ENCODE measurements at regions of chr1 and their contacts with region 1.

Region 1: GRCh38 chr1:78676347-78676982 is 26.8 kb downstream of the IFI44 start:
- DNase-seq: no peak
- H3K4me3 ChIP-seq: no peak overlapping the region
- H3K27ac ChIP-seq: no peak overlapping the region
- H3K4me1 ChIP-seq: no peaks in the 10 kb centered on the region
- H3K27me3 ChIP-seq: no peaks in the 10 kb centered on the region
- CTCF ChIP-seq: peak in 2 of 3 experiments; percentile 35 to 60; a peak in 2 of 4 replicates
- EP300 ChIP-seq: no peak
- POLR2A ChIP-seq: no peak
- RAD21 ChIP-seq: peak; percentile 62 to 68

Region 2: GRCh38 chr1:78617615-78618026 is 58.8 kb before region 1 on chr1:
- CTCF ChIA-PET with region 1: interaction called, 21 read pairs
- POLR2A ChIA-PET with region 1: no interaction called
- DNase-seq: peak; percentile 13 to 54
- H3K4me3 ChIP-seq: no peak overlapping the region
- H3K27ac ChIP-seq: no peak overlapping the region
- H3K4me1 ChIP-seq: no peaks in the 10 kb centered on the region
- H3K27me3 ChIP-seq: no peaks in the 10 kb centered on the region
- CTCF ChIP-seq: peak in 2 of 3 experiments; percentile 73 to 81; a peak in 3 of 4 replicates
- EP300 ChIP-seq: no peak
- POLR2A ChIP-seq: no peak
- RAD21 ChIP-seq: peak; percentile 78 to 84

Region 3: GRCh38 chr1:78664763-78665162 is 11.7 kb before region 1 on chr1:
- CTCF ChIA-PET with region 1: interaction called, 14 read pairs
- POLR2A ChIA-PET with region 1: no interaction called
- DNase-seq: no peak
- H3K4me3 ChIP-seq: no peak overlapping the region
- H3K27ac ChIP-seq: no peak overlapping the region
- H3K4me1 ChIP-seq: no peaks in the 10 kb centered on the region
- H3K27me3 ChIP-seq: no peaks in the 10 kb centered on the region; a peak in 1 of 7 replicates
- CTCF ChIP-seq: no peak
- EP300 ChIP-seq: no peak
- POLR2A ChIP-seq: no peak
- RAD21 ChIP-seq: no peak

Region 4: GRCh38 chr1:78688701-78689100 is 12.2 kb after region 1 on chr1:
- CTCF ChIA-PET with region 1: interaction called, 31 read pairs
- POLR2A ChIA-PET with region 1: no interaction called
- DNase-seq: no peak
- H3K4me3 ChIP-seq: no peak overlapping the region
- H3K27ac ChIP-seq: no peak overlapping the region
- H3K4me1 ChIP-seq: no peaks in the 10 kb centered on the region
- H3K27me3 ChIP-seq: no peaks in the 10 kb centered on the region
- CTCF ChIP-seq: peak in 1 of 3 experiments; percentile 23; a peak in 2 of 4 replicates
- EP300 ChIP-seq: no peak
- POLR2A ChIP-seq: no peak
- RAD21 ChIP-seq: peak; percentile 50 to 51